ENCODE measurements at regions of chrX and their contacts with region 1.

Region 1: GRCh38 chrX:12701628-12702027 is 89.6 kb upstream of the PRPS2 start:
- DNase-seq: peak; percentile 41 to 83
- ATAC-seq: peak; percentile 92 to 99
- H3K4me3 ChIP-seq: no peak overlapping the region
- H3K27ac ChIP-seq: no peak overlapping the region
- H3K4me1 ChIP-seq: no peaks in the 10 kb centered on the region
- CTCF ChIP-seq: peak; percentile 66
- EP300 ChIP-seq: no peak
- POLR2A ChIP-seq: no peak
- RAD21 ChIP-seq: peak; percentile 87 to 88

Region 2: DNA sequence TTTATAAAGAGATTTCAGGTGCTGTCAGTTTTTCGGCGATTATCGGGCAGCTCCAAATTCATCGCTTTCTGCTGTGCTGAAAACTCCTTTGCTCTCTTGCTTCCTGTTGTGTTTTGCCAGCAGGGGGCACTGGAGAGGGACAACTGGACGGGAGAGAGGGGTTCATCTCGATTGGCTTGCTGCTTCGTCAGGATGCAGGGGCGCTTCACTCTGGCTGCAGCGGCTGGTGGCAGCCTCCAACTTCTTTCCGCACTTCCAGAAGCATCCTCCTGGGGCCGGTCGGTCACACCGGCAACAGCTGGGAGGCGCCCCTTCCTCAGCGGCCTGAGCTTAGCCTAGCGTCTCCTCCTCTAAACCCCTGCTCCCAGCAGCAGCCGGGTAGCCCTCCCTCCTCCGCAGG is 914.1 kb before region 1 on chrX:
- CTCF ChIA-PET with region 1: interaction called, 16 read pairs
- POLR2A ChIA-PET with region 1: no interaction called
- DNase-seq: peak; percentile 43 to 79
- ATAC-seq: peak; percentile 89 to 98
- H3K4me3 ChIP-seq: peak overlapping the region; percentile 45
- H3K27ac ChIP-seq: peak overlapping the region; percentile 42 to 53; a peak in 3 of 6 replicates
- H3K4me1 ChIP-seq: peaks cover 6% of the 10 kb centered on the region; the same call in 1 of the 3 replicates
- CTCF ChIP-seq: peak; percentile 59
- EP300 ChIP-seq: no peak
- POLR2A ChIP-seq: no peak
- RAD21 ChIP-seq: peak; percentile 58 to 68

Region 3: GRCh38 chrX:12080265-12080664 is 621.4 kb before region 1 on chrX:
- CTCF ChIA-PET with region 1: interaction called, 27 read pairs
- POLR2A ChIA-PET with region 1: no interaction called
- DNase-seq: peak; percentile 6 to 49
- ATAC-seq: peak; percentile 34 to 69; a peak in 3 of 6 replicates
- H3K4me3 ChIP-seq: no peak overlapping the region
- H3K27ac ChIP-seq: no peak overlapping the region; a peak in 1 of 6 replicates
- H3K4me1 ChIP-seq: no peaks in the 10 kb centered on the region
- CTCF ChIP-seq: peak; percentile 64
- EP300 ChIP-seq: no peak
- POLR2A ChIP-seq: no peak
- RAD21 ChIP-seq: peak; percentile 79